ENCODE measurements at regions of chr7 and their contacts with region 1.

Region 1: DNA sequence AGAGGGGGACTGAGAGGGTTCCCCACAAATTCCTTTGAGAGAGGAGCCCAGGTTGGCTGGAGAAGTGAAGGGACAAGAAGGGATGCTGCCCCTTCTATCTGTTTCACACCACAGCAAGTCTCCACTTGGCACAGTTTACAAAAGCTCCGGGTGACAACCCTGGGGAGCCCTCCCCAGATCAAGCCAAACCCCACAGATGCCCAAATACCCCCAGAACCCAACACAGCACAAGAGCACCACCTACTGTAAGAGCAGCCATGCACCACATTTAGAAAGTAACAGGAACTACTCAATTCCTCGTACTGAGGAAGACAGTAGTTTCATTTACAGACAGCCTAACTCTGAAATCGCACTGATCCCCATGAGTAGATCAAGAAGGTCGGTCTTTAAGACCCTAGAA is 67.8 kb upstream of the ATP6V0A4 start:
- DNase-seq: peak; percentile 49
- H3K4me3 Mint-ChIP-seq: no peak overlapping the region
- H3K27ac Mint-ChIP-seq: no peak overlapping the region
- H3K4me1 Mint-ChIP-seq: peaks cover 24% of the 10 kb centered on the region
- H3K27me3 Mint-ChIP-seq: peaks cover 4% of the 10 kb centered on the region

Region 2: GRCh38 chr7:138161600-138162081 is 704.2 kb before region 1 on chr7:
- intact Hi-C with region 1: loop called (anchors 1 kb)
- DNase-seq: peak; percentile 61
- H3K4me3 Mint-ChIP-seq: no peak overlapping the region
- H3K27ac Mint-ChIP-seq: no peak overlapping the region
- H3K4me1 Mint-ChIP-seq: no peaks in the 10 kb centered on the region
- H3K27me3 Mint-ChIP-seq: peaks cover 7% of the 10 kb centered on the region

Region 3: GRCh38 chr7:138449580-138449979 is 416.3 kb before region 1 on chr7:
- intact Hi-C with region 1: loop called (anchors 2 kb)
- DNase-seq: no peak
- H3K4me3 Mint-ChIP-seq: no peak overlapping the region
- H3K27ac Mint-ChIP-seq: no peak overlapping the region
- H3K4me1 Mint-ChIP-seq: no peaks in the 10 kb centered on the region
- H3K27me3 Mint-ChIP-seq: peaks cover 5% of the 10 kb centered on the region

Region 4: DNA sequence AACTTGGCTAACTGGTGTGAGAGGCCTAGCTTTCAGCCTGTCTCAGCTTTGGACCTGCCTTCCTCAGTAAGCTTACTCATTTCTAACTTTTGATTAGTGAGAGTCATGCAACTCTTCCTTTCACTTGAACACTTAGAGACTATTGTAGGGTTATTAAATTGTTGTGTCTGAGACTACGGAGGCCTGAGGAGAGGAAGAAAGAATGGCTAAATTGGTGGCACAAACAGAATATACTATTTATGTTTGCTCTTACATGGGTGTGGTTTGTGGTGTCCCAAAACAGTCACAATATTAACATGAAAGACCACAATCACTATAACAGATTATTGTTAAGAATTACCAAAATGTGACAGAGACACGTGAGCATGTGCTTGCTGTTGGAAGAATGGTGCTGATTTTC is 323.7 kb before region 1 on chr7:
- intact Hi-C with region 1: no loop called
- DNase-seq: no peak
- H3K4me3 Mint-ChIP-seq: no peak overlapping the region
- H3K27ac Mint-ChIP-seq: no peak overlapping the region
- H3K4me1 Mint-ChIP-seq: peaks cover 9% of the 10 kb centered on the region
- H3K27me3 Mint-ChIP-seq: no peaks in the 10 kb centered on the region

Region 5: GRCh38 chr7:138625849-138626230 is 240.0 kb before region 1 on chr7:
- intact Hi-C with region 1: loop called (anchors 5 kb)
- DNase-seq: no peak
- H3K4me3 Mint-ChIP-seq: no peak overlapping the region
- H3K27ac Mint-ChIP-seq: no peak overlapping the region
- H3K4me1 Mint-ChIP-seq: peaks cover 32% of the 10 kb centered on the region
- H3K27me3 Mint-ChIP-seq: peaks cover 7% of the 10 kb centered on the region